Activated CD4-positive, alpha-beta memory T cell treated with anti-CD3 and anti-CD28 coated beads, Interleukin-2, amount 10 ng/mL, durations not matched to agents 7 days and 5 days (primary cell): ENCODE measurements at regions of chr19 and their contacts with region 1.

Region 1: DNA sequence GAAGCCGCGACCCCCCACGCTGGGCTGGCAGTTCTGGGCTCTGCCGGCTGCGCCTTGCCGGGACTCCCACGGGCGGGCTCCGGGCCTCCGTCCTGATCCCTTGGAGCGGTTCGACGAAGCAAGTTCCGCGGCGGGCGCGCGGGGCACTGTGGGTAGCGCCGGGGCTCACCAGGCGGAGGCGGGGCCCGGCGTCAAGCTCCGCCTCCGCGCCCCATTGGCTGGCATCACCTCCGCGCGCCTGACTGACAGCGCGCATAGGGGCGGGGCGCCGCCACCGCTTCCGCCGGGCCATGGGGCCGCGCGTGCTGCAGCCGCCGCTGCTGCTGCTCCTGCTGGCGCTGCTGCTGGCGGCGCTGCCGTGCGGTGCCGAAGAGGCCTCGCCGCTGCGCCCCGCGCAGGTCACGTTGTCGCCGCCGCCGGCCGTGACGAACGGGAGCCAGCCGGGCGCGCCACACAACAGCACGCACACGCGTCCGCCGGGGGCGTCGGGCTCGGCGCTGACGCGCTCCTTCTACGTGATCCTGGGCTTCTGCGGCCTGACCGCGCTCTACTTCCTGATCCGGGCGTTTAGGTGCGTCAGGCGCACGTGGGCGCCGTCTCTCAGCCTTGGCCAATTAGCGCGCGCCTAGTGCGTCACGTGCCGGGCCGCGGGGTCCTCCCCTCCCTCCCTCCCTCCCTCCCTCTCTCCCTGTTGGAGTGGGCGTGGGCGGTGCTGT is at the start of gene FAM174C:
- DNase-seq: peak; percentile 96
- H3K4me3 Mint-ChIP-seq: peak within 1 kb of the TSS; percentile 82
- H3K27ac Mint-ChIP-seq: peak within 1 kb of the TSS; percentile 96
- H3K4me1 Mint-ChIP-seq: peaks cover 55% of the 10 kb centered on the region
- H3K27me3 Mint-ChIP-seq: no peaks in the 10 kb centered on the region
- total RNA-seq, gene FAM174C: 45.9 to 50.1 TPM

Region 2: GRCh38 chr19:984165-984967 is 291.1 kb before region 1 on chr19 and contains the start of gene WDR18:
- CTCF ChIA-PET with region 1: no interaction called
- POLR2A ChIA-PET with region 1: no interaction called
- DNase-seq: peak; percentile 91
- H3K4me3 Mint-ChIP-seq: peak within 1 kb of the TSS; percentile 91
- H3K27ac Mint-ChIP-seq: peak within 1 kb of the TSS; percentile 83
- H3K4me1 Mint-ChIP-seq: peaks cover 22% of the 10 kb centered on the region
- H3K27me3 Mint-ChIP-seq: no peaks in the 10 kb centered on the region
- total RNA-seq, gene WDR18: 42.0 to 44.3 TPM

Region 3: GRCh38 chr19:1249298-1249989 is 26.0 kb before region 1 on chr19:
- CTCF ChIA-PET with region 1: interaction called, 23 read pairs
- POLR2A ChIA-PET with region 1: interaction called, 16 read pairs
- DNase-seq: peak; percentile 97
- H3K4me3 Mint-ChIP-seq: peak overlapping the region; percentile 80
- H3K27ac Mint-ChIP-seq: peak overlapping the region; percentile 82
- H3K4me1 Mint-ChIP-seq: peaks cover 16% of the 10 kb centered on the region
- H3K27me3 Mint-ChIP-seq: no peaks in the 10 kb centered on the region

Region 4: DNA sequence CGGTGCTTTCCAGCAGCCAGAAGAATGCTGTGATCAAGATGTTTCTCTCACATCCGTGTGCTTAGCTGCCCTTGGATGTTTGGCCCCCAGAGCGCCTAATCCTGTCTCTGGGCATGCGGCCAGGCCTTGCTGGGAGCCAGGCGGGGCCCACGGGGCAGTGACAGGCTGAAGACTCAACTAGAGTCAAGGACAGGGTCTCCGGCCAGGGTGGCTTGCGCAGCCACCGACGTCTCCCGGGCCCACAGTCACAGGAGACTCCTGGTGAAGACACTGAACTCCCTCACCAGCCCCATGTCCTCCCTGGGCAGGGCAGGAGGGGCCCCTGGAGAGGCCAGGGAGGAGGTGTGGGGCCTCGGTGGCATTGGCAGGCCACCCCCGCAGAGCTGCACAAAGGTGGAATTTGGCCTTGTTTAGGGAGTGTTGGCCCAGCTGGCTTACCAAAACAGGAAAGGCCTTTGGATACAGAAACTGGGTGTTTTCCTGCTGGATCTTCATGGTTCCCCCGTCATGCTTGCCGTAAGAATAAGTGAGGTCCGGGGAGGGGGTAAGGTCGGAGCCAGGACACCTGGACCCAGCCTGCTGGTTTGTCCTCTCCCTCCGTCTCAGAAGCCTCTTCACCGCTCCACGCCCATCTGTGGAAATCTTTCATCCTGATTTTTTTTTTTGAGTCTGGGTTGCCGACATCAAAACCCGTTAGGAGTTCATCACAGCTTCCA is 98.3 kb after region 1 on chr19:
- CTCF ChIA-PET with region 1: interaction called, 13 read pairs
- POLR2A ChIA-PET with region 1: no interaction called
- DNase-seq: no peak
- H3K4me3 Mint-ChIP-seq: no peak overlapping the region
- H3K27ac Mint-ChIP-seq: no peak overlapping the region
- H3K4me1 Mint-ChIP-seq: no peaks in the 10 kb centered on the region
- H3K27me3 Mint-ChIP-seq: no peaks in the 10 kb centered on the region